ENCODE measurements at regions of chr15 and their contacts with region 1.

Region 1: GRCh38 chr15:95446854-95447253 is 883.6 kb upstream of the NR2F2 start:
- DNase-seq: peak in 7 of 9 donors; percentile 31 to 79 (median 71)
- ATAC-seq: peak; percentile 92
- H3K4me3 ChIP-seq: peak overlapping the region; percentile 8
- H3K4me3 Mint-ChIP-seq: peak overlapping the region; percentile 58 to 84 (median 72)
- H3K27ac ChIP-seq: no peak overlapping the region
- H3K27ac Mint-ChIP-seq: peak overlapping the region in 7 of 9 donors; percentile 2 to 60 (median 53)
- H3K4me1 ChIP-seq: peaks cover 4 to 14% of the 10 kb centered on the region in 2 donors
- H3K4me1 Mint-ChIP-seq: peaks cover 18 to 47% (median 43%) of the 10 kb centered on the region in 7 donors
- H3K27me3 ChIP-seq: no peaks in the 10 kb centered on the region
- H3K27me3 Mint-ChIP-seq: peaks cover 4 to 16% (median 6%) of the 10 kb centered on the region in 5 donors

Region 2: GRCh38 chr15:95304151-95304946 is 142.5 kb before region 1 on chr15:
- CTCF ChIA-PET with region 1: no interaction called
- POLR2A ChIA-PET with region 1: no interaction called
- intact Hi-C with region 1: loop called in 1 of 2 experiments (anchors 5 kb)
- DNase-seq: no peak
- ATAC-seq: no peak
- H3K4me3 ChIP-seq: no peak overlapping the region
- H3K4me3 Mint-ChIP-seq: peak overlapping the region in 1 of 10 donors; percentile 56
- H3K27ac ChIP-seq: no peak overlapping the region
- H3K27ac Mint-ChIP-seq: no peak overlapping the region
- H3K4me1 ChIP-seq: no peaks in the 10 kb centered on the region
- H3K4me1 Mint-ChIP-seq: peaks cover 0 to 25% (median 9%) of the 10 kb centered on the region in 7 donors
- H3K27me3 ChIP-seq: no peaks in the 10 kb centered on the region
- H3K27me3 Mint-ChIP-seq: peaks cover 22 to 40% (median 39%) of the 10 kb centered on the region in 5 donors

Region 3: GRCh38 chr15:95511671-95512070 is 64.8 kb after region 1 on chr15:
- CTCF ChIA-PET with region 1: no interaction called
- POLR2A ChIA-PET with region 1: no interaction called
- intact Hi-C with region 1: no loop called
- DNase-seq: no peak
- ATAC-seq: no peak
- H3K4me3 ChIP-seq: no peak overlapping the region
- H3K4me3 Mint-ChIP-seq: no peak overlapping the region
- H3K27ac ChIP-seq: no peak overlapping the region
- H3K27ac Mint-ChIP-seq: no peak overlapping the region
- H3K4me1 ChIP-seq: no peaks in the 10 kb centered on the region
- H3K4me1 Mint-ChIP-seq: no peaks in the 10 kb centered on the region
- H3K27me3 ChIP-seq: no peaks in the 10 kb centered on the region
- H3K27me3 Mint-ChIP-seq: peaks cover 0 to 12% (median 6%) of the 10 kb centered on the region in 5 donors

Region 4: DNA sequence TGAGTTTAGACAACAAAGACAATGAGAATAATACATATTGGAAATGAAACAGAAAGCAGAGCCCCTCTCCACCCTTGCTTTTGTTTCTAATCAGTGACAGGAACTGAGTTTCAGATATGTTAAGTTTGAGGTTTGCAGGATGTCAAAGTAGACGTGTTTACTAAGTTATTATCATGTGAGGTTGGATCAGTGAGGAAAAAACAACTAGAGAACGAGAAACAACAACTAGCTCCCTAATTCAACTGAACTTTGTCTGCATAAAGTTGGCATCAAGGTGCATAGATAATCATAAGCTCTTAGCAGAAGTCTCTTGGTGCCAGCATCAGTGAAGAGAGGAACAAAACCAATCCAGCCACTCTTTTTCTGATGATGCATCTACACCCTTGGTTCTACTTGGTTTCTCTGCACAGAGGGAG is 392.5 kb after region 1 on chr15:
- CTCF ChIA-PET with region 1: no interaction called
- POLR2A ChIA-PET with region 1: no interaction called
- intact Hi-C with region 1: loop called in 1 of 2 experiments (anchors 5 kb)
- DNase-seq: peak in 6 of 9 donors; percentile 8 to 53 (median 39)
- ATAC-seq: peak; percentile 71
- H3K4me3 ChIP-seq: no peak overlapping the region
- H3K4me3 Mint-ChIP-seq: peak overlapping the region in 9 of 10 donors; percentile 0 to 81 (median 55)
- H3K27ac ChIP-seq: peak overlapping the region; percentile 24
- H3K27ac Mint-ChIP-seq: peak overlapping the region; percentile 40 to 95 (median 79)
- H3K4me1 ChIP-seq: peaks cover 21 to 22% of the 10 kb centered on the region in 2 donors
- H3K4me1 Mint-ChIP-seq: peaks cover 12 to 49% (median 43%) of the 10 kb centered on the region in 7 donors
- H3K27me3 ChIP-seq: no peaks in the 10 kb centered on the region
- H3K27me3 Mint-ChIP-seq: peaks cover 0 to 7% (median 0%) of the 10 kb centered on the region in 5 donors

Region 5: DNA sequence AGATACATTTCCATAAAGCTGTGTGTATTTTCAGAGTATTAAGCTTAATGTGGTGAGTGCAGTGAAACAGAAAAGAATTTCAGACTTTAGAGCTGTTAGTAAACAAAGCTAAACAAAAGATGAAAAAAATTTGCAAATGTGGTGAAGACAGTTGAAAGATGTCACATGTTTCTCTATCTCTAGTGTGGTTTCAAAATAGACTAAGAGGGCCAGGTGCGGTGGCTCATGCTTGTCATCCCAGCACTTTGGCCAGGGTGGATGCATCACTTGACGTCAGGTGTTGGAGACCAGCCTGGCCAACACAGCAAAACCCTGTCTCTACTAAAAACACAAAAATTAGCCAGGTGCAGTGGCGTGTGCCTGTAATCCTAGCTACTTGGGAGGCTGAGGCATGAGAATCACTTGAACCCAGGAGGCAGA is 417.6 kb after region 1 on chr15:
- CTCF ChIA-PET with region 1: no interaction called
- POLR2A ChIA-PET with region 1: no interaction called
- intact Hi-C with region 1: loop called in 1 of 2 experiments (anchors 1 kb)
- DNase-seq: no peak
- ATAC-seq: peak; percentile 60
- H3K4me3 ChIP-seq: no peak overlapping the region
- H3K4me3 Mint-ChIP-seq: peak overlapping the region in 1 of 10 donors; percentile 45
- H3K27ac ChIP-seq: no peak overlapping the region
- H3K27ac Mint-ChIP-seq: peak overlapping the region in 1 of 9 donors; percentile 82
- H3K4me1 ChIP-seq: peaks cover 0 to 7% of the 10 kb centered on the region in 2 donors
- H3K4me1 Mint-ChIP-seq: peaks cover under 1 to 43% (median 8%) of the 10 kb centered on the region in 7 donors
- H3K27me3 ChIP-seq: no peaks in the 10 kb centered on the region
- H3K27me3 Mint-ChIP-seq: peaks cover 0 to 67% (median 17%) of the 10 kb centered on the region in 5 donors

Region 6: GRCh38 chr15:96064351-96064756 is 617.5 kb after region 1 on chr15:
- CTCF ChIA-PET with region 1: no interaction called
- POLR2A ChIA-PET with region 1: no interaction called
- intact Hi-C with region 1: loop called in 1 of 2 experiments (anchors 5 kb)
- DNase-seq: no peak
- ATAC-seq: no peak
- H3K4me3 ChIP-seq: no peak overlapping the region
- H3K4me3 Mint-ChIP-seq: no peak overlapping the region
- H3K27ac ChIP-seq: no peak overlapping the region
- H3K27ac Mint-ChIP-seq: no peak overlapping the region
- H3K4me1 ChIP-seq: no peaks in the 10 kb centered on the region
- H3K4me1 Mint-ChIP-seq: no peaks in the 10 kb centered on the region
- H3K27me3 ChIP-seq: no peaks in the 10 kb centered on the region
- H3K27me3 Mint-ChIP-seq: peaks cover 6 to 38% (median 13%) of the 10 kb centered on the region in 5 donors

Measured in naive thymus-derived CD4-positive, alpha-beta T cell (primary cell).